Cardiac septum (tissue), 1 donor: ENCODE measurements at regions of chr9 and their contacts with region 1.

Region 1: DNA sequence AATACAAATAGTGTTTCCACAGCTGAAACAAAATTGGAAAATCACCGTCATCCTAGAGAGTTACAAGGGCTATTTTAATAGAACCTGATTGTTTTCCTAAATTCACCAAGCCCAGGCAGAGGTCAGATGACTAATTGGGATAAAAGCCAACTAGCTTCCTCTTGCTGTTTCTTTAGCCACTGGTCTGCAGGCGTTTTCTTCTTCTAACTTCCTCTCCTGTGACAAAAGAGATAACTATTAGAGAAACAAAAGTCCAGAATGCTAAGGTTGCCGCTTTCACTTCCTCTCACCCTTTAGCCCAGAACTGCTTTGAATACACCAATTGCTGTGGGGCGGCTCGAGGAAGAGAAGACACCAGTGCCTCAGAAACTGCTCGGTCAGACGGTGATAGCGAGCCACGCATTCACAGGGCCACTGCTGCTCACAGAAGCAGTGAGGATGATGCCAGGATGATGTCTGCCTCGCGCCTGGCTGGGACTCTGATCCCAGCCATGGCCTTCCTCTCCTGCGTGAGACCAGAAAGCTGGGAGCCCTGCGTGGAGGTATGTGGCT is at the start of gene TLR4:
- DNase-seq: peak; percentile 85
- total RNA-seq, gene TLR4: 7.5 TPM

Region 2: DNA sequence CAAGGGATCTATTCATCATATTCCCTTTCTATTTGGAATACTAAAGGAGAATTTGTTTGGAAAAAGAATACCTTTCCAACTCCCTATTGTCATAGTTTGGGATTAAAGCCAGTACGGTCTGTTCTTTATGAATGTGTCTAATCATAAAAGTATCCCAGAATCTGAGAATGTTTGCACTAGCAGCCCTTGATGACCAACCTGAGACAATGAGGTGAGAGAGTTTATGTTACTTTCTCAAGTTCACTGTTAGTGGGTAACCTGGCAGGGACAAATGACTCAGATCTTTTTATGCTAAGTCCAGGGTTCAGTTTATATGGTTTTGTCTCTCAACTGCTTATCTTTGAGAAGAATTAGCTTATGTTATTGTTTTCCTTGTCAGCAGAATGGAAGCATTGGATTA is 25.2 kb before region 1 on chr9:
- intact Hi-C with region 1: loop called (anchors 2 kb)
- DNase-seq: no peak

Region 3: DNA sequence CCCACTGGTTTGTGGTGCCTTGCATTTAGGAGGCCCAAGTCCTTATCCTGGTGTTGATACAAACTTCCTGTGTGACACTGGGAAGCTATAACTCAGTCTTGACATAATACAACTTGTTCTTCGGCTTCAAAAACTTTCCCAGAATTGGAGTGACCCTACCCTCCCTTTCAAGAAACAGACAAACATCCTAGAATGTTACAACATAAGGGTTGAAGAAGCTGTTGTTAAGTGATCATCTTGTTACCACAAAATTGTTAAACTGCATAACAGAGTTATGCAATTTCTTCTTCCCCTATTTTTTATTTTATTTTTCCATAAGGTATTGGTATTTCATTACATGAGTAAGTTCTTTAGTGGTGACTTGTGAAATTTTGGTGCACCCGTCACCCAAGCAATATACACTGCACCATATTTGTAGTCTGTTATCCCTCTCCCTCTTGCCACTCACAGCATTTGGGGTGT is 21.4 kb after region 1 on chr9:
- intact Hi-C with region 1: loop called (anchors 2 kb)
- DNase-seq: no peak